ENCODE measurements at regions of chr11 and their contacts with region 1.

Region 1: GRCh38 chr11:103682318-103683184 is 353.9 kb upstream of the DDI1 start:
- DNase-seq: peak; percentile 86
- H3K4me3 ChIP-seq: no peak overlapping the region
- H3K27ac ChIP-seq: no peak overlapping the region
- H3K4me1 ChIP-seq: peaks cover 19% of the 10 kb centered on the region
- H3K27me3 ChIP-seq: no peaks in the 10 kb centered on the region
- CTCF ChIP-seq: peak; percentile 67 to 81
- POLR2A ChIP-seq: no peak

Region 2: DNA sequence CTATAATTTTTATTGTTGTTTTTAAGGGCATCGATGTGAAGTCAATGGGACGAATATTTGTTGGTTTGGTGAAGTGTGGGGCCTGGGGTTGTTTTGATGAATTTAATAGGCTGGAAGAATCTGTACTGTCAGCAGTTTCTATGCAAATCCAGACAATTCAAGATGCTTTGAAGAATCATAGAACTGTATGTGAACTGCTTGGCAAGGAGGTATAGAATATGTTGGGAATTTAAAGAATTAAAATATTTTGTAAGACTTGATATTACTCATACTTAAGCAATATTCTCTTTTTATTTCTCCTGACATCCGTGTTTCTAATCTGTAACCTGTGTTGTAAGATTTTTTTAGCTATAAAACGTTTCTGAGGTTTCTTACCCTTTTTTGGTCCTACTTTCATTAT is 511.7 kb before region 1 on chr11:
- CTCF ChIA-PET with region 1: no interaction called
- POLR2A ChIA-PET with region 1: no interaction called
- dilution Hi-C with region 1: no loop called
- intact Hi-C with region 1: no loop called
- DNase-seq: no peak
- H3K4me3 ChIP-seq: no peak overlapping the region
- H3K27ac ChIP-seq: no peak overlapping the region
- H3K4me1 ChIP-seq: no peaks in the 10 kb centered on the region
- H3K27me3 ChIP-seq: no peaks in the 10 kb centered on the region
- CTCF ChIP-seq: no peak
- POLR2A ChIP-seq: no peak

Region 3: DNA sequence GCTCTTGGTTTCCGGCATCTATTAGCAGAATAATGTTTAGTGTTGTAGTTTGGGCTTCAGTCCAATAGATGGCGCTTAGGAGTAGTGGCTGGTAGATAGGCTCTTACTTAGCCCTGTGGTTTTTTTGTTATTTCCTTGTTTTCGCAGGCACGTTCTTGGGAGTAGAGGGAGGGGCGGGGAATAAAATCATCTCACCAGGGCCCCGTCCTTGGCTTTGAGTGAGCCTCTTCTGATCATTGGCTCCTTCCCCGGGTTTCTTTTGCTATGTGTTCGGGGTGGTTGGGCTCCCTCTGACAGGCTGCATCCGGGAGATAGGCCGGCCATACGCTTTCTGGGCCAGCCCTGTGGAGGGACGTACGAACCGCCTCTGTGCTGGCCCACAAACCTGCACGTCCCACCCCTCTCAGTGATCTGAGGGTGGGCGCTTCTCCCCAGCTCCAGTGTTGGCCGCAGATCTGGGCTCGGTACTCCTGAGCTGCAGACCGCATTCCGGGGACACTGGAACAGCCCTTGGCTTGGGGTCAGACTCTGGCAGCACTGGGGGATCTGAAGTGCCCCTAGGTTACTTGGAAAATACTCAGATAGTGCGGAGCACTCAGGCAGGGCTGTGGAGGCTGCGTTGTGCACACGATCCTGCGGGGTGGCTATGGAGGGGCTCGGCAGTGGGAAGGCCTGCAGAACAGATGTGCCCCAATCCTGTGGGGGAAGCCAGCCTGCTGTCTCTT is 356.3 kb before region 1 on chr11:
- CTCF ChIA-PET with region 1: no interaction called
- POLR2A ChIA-PET with region 1: no interaction called
- dilution Hi-C with region 1: no loop called
- intact Hi-C with region 1: no loop called
- DNase-seq: peak; percentile 77
- H3K4me3 ChIP-seq: no peak overlapping the region
- H3K27ac ChIP-seq: no peak overlapping the region
- H3K4me1 ChIP-seq: peaks cover 8% of the 10 kb centered on the region
- H3K27me3 ChIP-seq: no peaks in the 10 kb centered on the region
- CTCF ChIP-seq: peak; percentile 67 to 74
- POLR2A ChIP-seq: no peak

Region 4: DNA sequence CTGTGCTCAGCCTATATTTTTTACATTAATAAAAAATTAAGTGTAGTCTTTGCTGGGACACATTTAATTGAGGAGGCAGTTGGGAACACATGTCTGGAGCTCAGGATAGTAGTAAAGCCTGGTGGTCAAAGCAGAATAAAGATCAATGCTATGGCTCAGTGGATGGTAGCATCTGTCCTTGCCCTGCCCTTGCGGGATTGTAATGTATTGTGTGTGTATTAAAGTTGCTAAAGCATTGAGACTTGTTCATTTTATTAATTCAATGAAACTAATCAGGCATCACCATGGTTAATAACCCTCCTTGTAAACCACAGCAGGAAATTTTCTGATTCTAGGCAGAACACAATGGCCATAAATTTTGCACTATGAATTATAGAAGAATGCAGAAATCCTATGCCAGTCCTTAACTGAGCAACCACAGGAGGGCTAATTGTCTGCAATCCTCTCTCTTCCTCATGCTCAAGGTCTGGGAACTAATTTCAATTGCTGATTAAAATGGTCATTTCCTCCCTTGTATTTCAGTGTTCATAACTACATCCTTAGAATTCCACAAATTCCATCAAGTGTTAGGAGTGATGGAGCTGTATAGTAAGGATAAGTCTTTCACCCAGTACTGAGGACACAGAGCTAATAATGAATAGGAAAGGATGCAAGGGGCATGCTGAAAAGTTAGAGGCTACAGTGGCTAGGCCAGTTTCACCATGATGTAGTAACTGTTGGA is 49.3 kb before region 1 on chr11:
- CTCF ChIA-PET with region 1: interaction called, 10 read pairs
- POLR2A ChIA-PET with region 1: no interaction called
- dilution Hi-C with region 1: no loop called
- intact Hi-C with region 1: loop called (anchors 2 kb)
- DNase-seq: peak; percentile 81
- H3K4me3 ChIP-seq: no peak overlapping the region
- H3K27ac ChIP-seq: peak overlapping the region; percentile 97
- H3K4me1 ChIP-seq: peaks cover 42% of the 10 kb centered on the region
- H3K27me3 ChIP-seq: no peaks in the 10 kb centered on the region
- CTCF ChIP-seq: peak in 1 of 2 donors; percentile 27
- POLR2A ChIP-seq: no peak

Region 5: GRCh38 chr11:103798026-103798425 is 115.5 kb after region 1 on chr11:
- CTCF ChIA-PET with region 1: interaction called, 3 read pairs
- POLR2A ChIA-PET with region 1: no interaction called
- dilution Hi-C with region 1: no loop called
- intact Hi-C with region 1: loop called (anchors 1 kb)
- DNase-seq: peak; percentile 75
- H3K4me3 ChIP-seq: no peak overlapping the region
- H3K27ac ChIP-seq: peak overlapping the region; percentile 21
- H3K4me1 ChIP-seq: peaks cover 23% of the 10 kb centered on the region
- H3K27me3 ChIP-seq: no peaks in the 10 kb centered on the region
- CTCF ChIP-seq: no peak
- POLR2A ChIP-seq: no peak

Region 6: DNA sequence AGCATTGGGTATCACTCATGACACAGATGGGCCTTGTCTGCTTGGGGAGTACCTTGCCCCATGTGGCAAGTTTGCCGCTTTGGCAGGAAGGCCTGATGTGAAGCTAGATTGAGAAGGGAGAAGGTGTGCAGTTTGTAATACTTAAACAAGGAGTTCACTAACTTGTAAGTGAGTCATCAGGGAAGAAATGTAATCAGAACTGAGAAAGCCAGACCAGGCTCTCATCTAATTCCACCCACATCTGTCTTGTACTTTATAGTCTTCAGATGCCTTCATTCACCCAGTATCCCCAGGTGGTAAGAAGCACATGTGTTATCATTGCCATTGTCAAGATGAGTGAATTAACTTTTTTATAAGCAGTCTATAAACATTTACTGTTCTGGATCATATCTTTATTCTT is 237.9 kb after region 1 on chr11:
- CTCF ChIA-PET with region 1: interaction called, 10 read pairs
- POLR2A ChIA-PET with region 1: no interaction called
- dilution Hi-C with region 1: no loop called
- intact Hi-C with region 1: no loop called
- DNase-seq: no peak
- H3K4me3 ChIP-seq: no peak overlapping the region
- H3K27ac ChIP-seq: no peak overlapping the region
- H3K4me1 ChIP-seq: no peaks in the 10 kb centered on the region
- H3K27me3 ChIP-seq: no peaks in the 10 kb centered on the region
- CTCF ChIP-seq: no peak
- POLR2A ChIP-seq: no peak

Region 7: DNA sequence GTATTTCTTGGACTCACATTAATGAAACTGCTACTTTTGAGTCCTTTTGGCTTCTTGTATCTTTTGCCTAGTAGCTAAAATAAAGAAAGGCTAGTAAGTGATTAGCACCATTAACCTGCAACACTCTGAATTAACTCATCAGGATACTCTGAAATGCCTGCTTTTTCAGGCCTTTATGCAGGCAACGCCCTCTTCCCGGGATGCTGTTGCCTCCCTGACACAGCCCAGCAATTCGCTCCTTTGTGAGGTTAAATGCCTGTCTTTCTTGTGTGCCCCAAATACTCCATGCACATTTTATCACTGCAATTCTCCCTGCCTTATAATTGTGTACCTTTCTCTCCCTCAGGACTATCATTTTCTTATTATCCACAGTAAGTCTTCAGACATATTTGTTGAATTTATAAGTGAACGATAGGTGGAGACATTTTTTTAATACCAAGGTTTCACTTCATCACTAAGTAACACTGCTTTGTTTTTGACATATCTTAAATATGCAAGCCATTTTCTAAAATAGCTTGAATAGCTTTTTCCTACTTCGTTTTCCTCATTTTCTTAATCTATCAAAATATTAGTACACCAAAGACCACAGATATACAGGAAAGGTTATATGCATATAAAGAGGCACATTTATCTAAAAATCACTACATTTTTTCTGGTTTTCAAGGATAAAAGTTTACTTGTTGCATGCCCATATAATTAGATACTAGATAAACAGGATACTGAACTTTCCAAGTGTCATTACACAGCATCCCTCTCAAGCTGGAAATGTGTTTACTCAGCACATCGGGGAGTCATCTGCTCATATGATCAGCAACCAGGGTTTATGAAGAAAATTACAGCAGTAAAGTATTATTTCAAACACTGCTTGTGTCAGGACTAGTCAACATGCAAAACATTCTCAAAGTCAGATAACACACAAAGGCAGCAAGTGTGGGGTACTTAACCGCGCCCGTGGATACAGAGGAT is 305.4 kb after region 1 on chr11:
- CTCF ChIA-PET with region 1: no interaction called
- POLR2A ChIA-PET with region 1: no interaction called
- dilution Hi-C with region 1: no loop called
- intact Hi-C with region 1: no loop called
- DNase-seq: no peak
- H3K4me3 ChIP-seq: no peak overlapping the region
- H3K27ac ChIP-seq: no peak overlapping the region
- H3K4me1 ChIP-seq: no peaks in the 10 kb centered on the region
- H3K27me3 ChIP-seq: no peaks in the 10 kb centered on the region
- CTCF ChIP-seq: no peak
- POLR2A ChIP-seq: no peak

Region 8: DNA sequence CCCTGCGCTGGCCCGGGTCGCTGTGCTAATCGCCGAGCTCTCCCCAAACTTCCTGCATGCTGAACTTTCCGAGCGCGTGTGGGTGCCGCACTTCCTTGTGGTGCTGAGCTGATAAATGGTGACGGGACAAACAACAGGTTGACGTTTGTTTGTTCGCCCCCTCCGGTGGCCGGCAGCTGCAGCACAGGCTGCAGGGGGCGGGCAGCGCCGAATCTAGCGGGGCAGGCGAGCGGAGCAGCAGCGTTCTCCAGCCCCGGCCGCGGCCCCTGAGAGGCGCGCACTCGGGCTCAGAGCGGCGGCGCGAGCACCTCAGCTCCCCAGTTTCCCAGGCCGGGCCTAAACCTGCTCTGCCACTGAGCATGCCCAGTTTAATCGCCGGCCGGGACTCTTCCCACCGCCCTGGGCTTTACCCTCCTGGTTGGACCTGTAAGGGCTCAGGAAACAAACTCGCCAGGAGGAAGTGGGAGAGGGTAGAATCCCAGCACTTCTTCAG is 481.5 kb after region 1 on chr11 and contains the start of gene PDGFD:
- CTCF ChIA-PET with region 1: interaction called, 64 read pairs
- POLR2A ChIA-PET with region 1: no interaction called
- dilution Hi-C with region 1: no loop called
- intact Hi-C with region 1: loop called (anchors 1 kb)
- DNase-seq: peak; percentile 89
- H3K4me3 ChIP-seq: peak within 1 kb of the TSS; percentile 66 to 94 (median 93)
- H3K27ac ChIP-seq: peak within 1 kb of the TSS; percentile 52
- H3K4me1 ChIP-seq: peaks cover 10% of the 10 kb centered on the region
- H3K27me3 ChIP-seq: no peaks in the 10 kb centered on the region
- CTCF ChIP-seq: peak; percentile 57 to 73
- POLR2A ChIP-seq: no peak
- total RNA-seq, gene PDGFD: 13.1 and 14.1 TPM in 2 replicates

Region 9: GRCh38 chr11:104609311-104610085 is 926.9 kb after region 1 on chr11:
- CTCF ChIA-PET with region 1: interaction called, 4 read pairs
- POLR2A ChIA-PET with region 1: no interaction called
- dilution Hi-C with region 1: no loop called
- intact Hi-C with region 1: loop called (anchors 1 kb)
- DNase-seq: peak; percentile 80
- H3K4me3 ChIP-seq: no peak overlapping the region
- H3K27ac ChIP-seq: no peak overlapping the region
- H3K4me1 ChIP-seq: peaks cover 8% of the 10 kb centered on the region
- H3K27me3 ChIP-seq: no peaks in the 10 kb centered on the region
- CTCF ChIP-seq: peak; percentile 69 to 74
- POLR2A ChIP-seq: no peak